Adrenal gland (tissue), 19 donors: ENCODE measurements at regions of chr4 and their contacts with region 1.

Region 1: DNA sequence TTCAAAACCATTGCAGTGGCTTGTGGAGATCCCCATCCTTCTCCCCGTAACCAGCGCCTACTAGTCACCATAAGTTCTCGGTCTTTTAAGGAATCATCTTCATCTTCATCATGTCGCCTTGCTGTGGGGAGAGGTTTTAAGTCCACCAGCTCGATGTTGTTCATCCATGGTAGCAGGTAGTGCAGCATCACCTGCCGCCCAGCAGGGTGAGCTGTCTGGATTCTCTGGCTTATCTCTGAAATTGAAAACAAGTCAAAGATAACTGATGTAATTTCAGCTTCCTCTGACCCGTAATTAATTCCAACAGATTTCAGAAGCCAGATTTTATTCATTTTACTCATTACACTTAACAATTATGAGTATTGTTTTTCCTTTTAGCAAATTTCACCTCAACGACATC is 67.4 kb downstream of the ZAR1 start:
- DNase-seq: no peak
- H3K4me3 ChIP-seq: no peak overlapping the region
- H3K27ac ChIP-seq: no peak overlapping the region
- H3K4me1 ChIP-seq: no peaks in the 10 kb centered on the region
- H3K27me3 ChIP-seq: no peaks in the 10 kb centered on the region
- CTCF ChIP-seq: no peak
- POLR2A ChIP-seq: no peak

Region 2: GRCh38 chr4:48329976-48330375 is 227.5 kb before region 1 on chr4:
- intact Hi-C with region 1: loop called in 1 of 2 experiments (anchors 10 kb)
- DNase-seq: no peak
- H3K4me3 ChIP-seq: no peak overlapping the region
- H3K27ac ChIP-seq: no peak overlapping the region
- H3K4me1 ChIP-seq: no peaks in the 10 kb centered on the region
- H3K27me3 ChIP-seq: no peaks in the 10 kb centered on the region
- CTCF ChIP-seq: no peak
- POLR2A ChIP-seq: no peak

Region 3: GRCh38 chr4:48877827-48878533 is 320.5 kb after region 1 on chr4:
- intact Hi-C with region 1: no loop called
- DNase-seq: no peak
- H3K4me3 ChIP-seq: no peak overlapping the region
- H3K27ac ChIP-seq: no peak overlapping the region
- H3K4me1 ChIP-seq: no peaks in the 10 kb centered on the region
- H3K27me3 ChIP-seq: no peaks in the 10 kb centered on the region
- CTCF ChIP-seq: no peak
- POLR2A ChIP-seq: no peak